ENCODE measurements at regions of chr12 and their contacts with region 1.

Region 1: DNA sequence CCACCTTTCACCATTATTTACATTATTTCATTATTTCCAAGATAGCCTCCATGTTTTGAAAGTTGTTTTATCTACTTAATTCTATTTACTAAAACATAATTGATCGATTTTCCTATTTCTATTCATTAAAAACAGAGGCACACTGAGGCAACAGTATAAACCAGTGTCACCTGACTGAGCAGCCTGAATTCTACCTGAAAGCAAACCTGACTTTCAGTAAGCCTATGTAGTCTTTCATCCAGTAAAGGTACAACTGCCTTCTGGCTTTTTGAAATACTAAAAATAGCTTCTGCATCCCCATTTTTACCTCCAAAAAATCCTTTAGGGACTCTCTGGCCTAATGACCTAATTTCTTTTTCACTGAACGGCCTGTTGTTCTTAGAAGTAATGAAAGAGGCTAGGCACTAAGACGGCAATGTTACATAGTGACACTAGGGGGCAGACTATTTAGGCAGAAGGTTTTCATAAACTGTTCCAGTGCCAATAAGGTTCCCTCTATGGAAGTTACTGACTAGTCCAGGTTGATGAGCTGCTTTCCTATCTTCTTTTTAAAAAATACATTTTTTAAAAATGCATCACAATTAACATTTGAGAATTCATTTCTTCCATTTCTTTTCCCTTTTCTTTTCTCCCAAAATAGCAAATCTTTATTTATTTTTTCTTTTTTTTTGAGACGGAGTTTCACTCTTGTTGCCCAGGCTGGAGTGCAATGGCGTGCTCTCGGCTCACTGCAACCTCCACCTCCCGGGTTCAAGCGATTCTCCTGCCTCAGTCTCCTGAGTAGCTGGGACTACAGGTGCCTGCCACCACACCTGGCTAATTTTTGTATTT is 17.5 kb downstream of the ANAPC5 start:
- DNase-seq: peak; percentile 64
- H3K4me3 ChIP-seq: no peak overlapping the region; a peak in 1 of 4 replicates
- H3K27ac ChIP-seq: no peak overlapping the region
- H3K4me1 ChIP-seq: peaks cover 0 to 4% of the 10 kb centered on the region in 2 experiments; a peak in 1 of 4 replicates
- H3K27me3 ChIP-seq: no peaks in the 10 kb centered on the region
- CTCF ChIP-seq: peak; percentile 92
- EP300 ChIP-seq: no peak
- RAD21 ChIP-seq: peak; percentile 82

Region 2: DNA sequence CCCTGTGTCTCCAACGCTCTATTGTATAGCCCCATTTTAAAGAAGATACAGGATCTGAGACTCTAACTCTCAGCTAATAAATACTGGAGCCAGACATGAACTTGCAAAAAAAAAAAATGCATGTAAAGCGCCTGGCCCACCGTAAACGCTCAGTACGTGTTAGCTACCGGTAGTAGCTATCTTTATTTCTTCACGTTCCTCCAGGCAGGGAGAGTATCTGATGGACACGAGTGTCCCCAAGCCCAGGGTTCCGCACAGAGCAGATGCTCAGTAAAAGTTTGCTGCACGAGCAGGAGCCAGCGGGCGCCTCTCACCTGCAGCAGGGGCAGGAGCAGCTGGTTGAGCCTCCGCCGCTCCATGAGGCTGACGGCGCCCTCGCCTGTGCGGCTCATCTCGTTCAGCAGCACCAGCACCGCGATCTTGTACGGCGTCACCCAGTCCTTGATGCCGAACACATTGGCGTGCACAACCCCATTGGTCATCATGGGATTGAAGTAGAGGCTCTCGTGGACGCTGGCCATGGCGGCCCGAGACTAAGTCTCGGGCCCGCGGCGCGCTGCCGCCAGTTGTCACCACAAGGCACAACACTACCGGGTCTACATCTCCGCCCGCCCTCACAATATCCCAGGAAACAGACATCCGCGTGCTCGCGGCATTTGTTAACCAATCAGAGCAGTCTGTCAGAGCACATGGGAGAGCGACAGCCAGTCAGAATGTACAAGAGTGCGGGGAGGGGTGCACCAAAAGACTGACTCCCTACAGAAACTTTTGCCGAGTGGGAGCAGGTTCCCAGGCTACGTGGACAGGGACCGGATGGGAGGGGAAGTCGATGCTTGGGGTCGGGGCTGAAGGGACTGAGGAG is 17.3 kb after region 1 on chr12 and contains the start of gene ANAPC5:
- CTCF ChIA-PET with region 1: interaction called, 20 read pairs
- POLR2A ChIA-PET with region 1: interaction called, 6 read pairs
- DNase-seq: peak; percentile 92
- H3K4me3 ChIP-seq: peak within 1 kb of the TSS; percentile 75 to 84
- H3K27ac ChIP-seq: peak within 1 kb of the TSS; percentile 84 to 86
- H3K4me1 ChIP-seq: no peaks in the 10 kb centered on the region; a peak in 1 of 4 replicates
- H3K27me3 ChIP-seq: no peaks in the 10 kb centered on the region
- CTCF ChIP-seq: no peak
- EP300 ChIP-seq: peak; percentile 6 to 9; a peak in 1 of 4 replicates
- RAD21 ChIP-seq: no peak
- polyA plus RNA-seq, gene ANAPC5: 110 and 158 TPM in 2 replicates

Region 3: DNA sequence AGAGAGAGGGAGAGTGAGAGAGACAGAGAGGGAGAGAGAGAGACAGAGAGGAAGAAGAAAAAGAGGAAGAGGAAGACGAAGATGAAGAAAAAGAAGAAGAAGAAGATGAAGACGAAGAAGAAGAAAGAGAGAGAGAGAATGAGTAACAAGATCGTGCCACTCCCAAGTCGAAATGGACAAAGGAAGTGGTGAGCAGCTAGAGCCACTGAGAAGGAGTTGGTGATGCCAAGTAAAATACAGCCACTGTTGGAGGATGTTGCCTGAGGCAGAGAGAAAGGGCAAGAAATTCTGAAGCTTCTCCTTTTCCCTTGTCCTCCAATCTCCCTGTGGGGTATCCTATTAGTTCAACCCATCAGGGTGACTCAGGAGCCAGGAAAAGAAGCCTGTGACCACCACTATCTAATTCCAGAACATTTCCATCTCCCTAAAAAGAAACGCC is 30.0 kb after region 1 on chr12:
- CTCF ChIA-PET with region 1: no interaction called
- POLR2A ChIA-PET with region 1: no interaction called
- DNase-seq: no peak
- H3K4me3 ChIP-seq: no peak overlapping the region
- H3K27ac ChIP-seq: peak overlapping the region in 1 of 2 experiments; percentile 25; a peak in 1 of 4 replicates
- H3K4me1 ChIP-seq: peaks cover 2 to 13% of the 10 kb centered on the region in 2 experiments; a peak in 3 of 4 replicates
- H3K27me3 ChIP-seq: no peaks in the 10 kb centered on the region
- CTCF ChIP-seq: no peak
- EP300 ChIP-seq: no peak
- RAD21 ChIP-seq: no peak

Region 4: GRCh38 chr12:121423682-121424623 is 89.2 kb after region 1 on chr12:
- CTCF ChIA-PET with region 1: interaction called, 10 read pairs
- POLR2A ChIA-PET with region 1: interaction called, 3 read pairs
- DNase-seq: no peak
- H3K4me3 ChIP-seq: no peak overlapping the region
- H3K27ac ChIP-seq: no peak overlapping the region
- H3K4me1 ChIP-seq: 0 out of 4 replicates have a peak, but pooled peaks cover 0 to 3% of the 10 kb centered on the region in 2 experiments
- H3K27me3 ChIP-seq: no peaks in the 10 kb centered on the region
- CTCF ChIP-seq: no peak
- EP300 ChIP-seq: no peak
- RAD21 ChIP-seq: no peak

Region 5: DNA sequence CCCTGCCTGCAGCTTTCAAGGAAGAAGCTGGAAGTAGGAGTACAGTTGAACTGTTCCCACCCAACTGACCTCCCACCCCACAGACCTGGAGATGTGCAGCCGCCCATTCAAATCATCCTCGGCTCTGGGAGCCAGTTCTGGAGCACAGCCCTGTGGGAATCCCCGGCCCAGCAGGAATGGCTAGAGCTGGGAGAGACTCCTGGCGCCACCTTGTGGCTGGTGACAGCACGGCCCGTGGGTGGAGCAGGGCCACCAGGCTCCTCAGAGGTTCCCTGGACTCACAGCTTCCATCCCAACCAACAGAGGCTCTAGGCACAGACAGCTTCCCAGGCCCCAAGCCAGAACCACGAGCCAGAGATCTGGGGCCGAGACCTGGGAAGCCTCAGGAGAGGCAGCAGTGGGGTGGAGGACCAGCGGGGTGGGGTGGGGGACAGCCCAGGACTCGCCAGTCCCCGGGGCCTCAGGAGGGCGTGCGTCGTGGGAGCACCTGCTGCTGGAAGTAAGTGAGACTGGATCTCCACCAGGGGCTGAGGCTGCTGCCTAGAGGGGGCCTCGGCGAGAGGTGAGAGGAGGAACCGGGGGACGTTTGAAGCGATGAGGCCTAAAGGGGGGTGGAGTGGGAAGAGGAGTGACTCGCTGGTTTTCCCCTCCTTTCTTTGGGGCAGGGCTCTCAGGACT is 108.6 kb after region 1 on chr12:
- CTCF ChIA-PET with region 1: interaction called, 192 read pairs
- POLR2A ChIA-PET with region 1: no interaction called
- DNase-seq: peak; percentile 97
- H3K4me3 ChIP-seq: no peak overlapping the region; a peak in 1 of 4 replicates
- H3K27ac ChIP-seq: no peak overlapping the region
- H3K4me1 ChIP-seq: peaks cover 0 to 2% of the 10 kb centered on the region in 2 experiments; a peak in 1 of 4 replicates
- H3K27me3 ChIP-seq: no peaks in the 10 kb centered on the region
- CTCF ChIP-seq: peak; percentile 88
- EP300 ChIP-seq: no peak
- RAD21 ChIP-seq: peak; percentile 92

Region 6: GRCh38 chr12:121461048-121461447 is 126.3 kb after region 1 on chr12:
- CTCF ChIA-PET with region 1: interaction called, 14 read pairs
- POLR2A ChIA-PET with region 1: interaction called, 3 read pairs
- DNase-seq: no peak
- H3K4me3 ChIP-seq: no peak overlapping the region
- H3K27ac ChIP-seq: no peak overlapping the region
- H3K4me1 ChIP-seq: peaks cover 0 to 5% of the 10 kb centered on the region in 2 experiments; a peak in 1 of 4 replicates
- H3K27me3 ChIP-seq: no peaks in the 10 kb centered on the region
- CTCF ChIP-seq: no peak
- EP300 ChIP-seq: no peak
- RAD21 ChIP-seq: no peak

Measured in SK-N-SH (cell line).